Adrenal gland (tissue), 19 donors: ENCODE measurements at regions of chr22 and their contacts with region 1.

Region 1: GRCh38 chr22:19730655-19731360 is 7.5 kb downstream of the GP1BB start:
- DNase-seq: peak; percentile 74 to 87 (median 84)
- H3K4me3 ChIP-seq: peak overlapping the region in 2 of 4 donors; percentile 16 to 24
- H3K27ac ChIP-seq: no peak overlapping the region
- H3K4me1 ChIP-seq: peaks cover 3 to 5% of the 10 kb centered on the region in 2 donors
- H3K27me3 ChIP-seq: no peaks in the 10 kb centered on the region
- CTCF ChIP-seq: peak; percentile 93 to 97 (median 96)
- POLR2A ChIP-seq: no peak

Region 2: DNA sequence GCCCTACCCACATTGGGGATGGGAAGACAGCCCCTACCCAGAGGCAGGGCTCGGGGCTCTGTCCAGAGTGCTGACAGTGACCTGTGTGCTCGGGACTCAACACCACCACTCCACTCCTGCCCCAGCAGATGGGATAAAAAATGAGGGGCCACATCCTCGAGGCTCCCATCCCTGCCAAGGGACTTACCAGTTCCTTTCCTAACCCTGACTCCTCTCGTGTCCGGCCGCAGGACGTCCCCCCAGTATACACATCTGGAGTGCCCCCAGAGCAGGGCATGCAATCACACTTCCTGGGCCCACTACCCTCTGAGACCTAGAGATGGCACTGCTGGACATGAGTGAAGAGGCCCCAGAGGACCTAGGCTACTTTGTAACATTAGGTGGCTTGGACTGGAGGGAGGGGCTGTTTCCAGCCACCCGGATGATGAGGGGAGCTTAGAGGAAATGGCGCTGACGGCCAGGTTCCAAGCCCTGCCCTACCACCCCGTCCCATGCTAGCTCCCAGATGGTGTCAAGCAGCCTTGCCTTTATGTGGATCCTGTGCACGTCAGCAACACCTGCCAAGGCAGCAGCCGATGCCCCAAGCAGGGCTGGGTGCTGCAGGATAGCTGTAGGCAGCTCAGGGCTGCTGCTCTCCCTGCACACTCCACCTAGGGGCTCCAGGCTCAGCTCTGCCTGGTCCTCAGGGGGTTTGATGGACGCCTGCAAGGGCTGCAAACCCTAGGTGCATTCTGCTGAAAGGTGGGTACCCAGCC is 695.2 kb before region 1 on chr22:
- intact Hi-C with region 1: no loop called
- DNase-seq: peak in 3 of 7 donors; percentile 19 to 54 (median 26)
- H3K4me3 ChIP-seq: no peak overlapping the region
- H3K27ac ChIP-seq: no peak overlapping the region
- H3K4me1 ChIP-seq: no peaks in the 10 kb centered on the region
- H3K27me3 ChIP-seq: no peaks in the 10 kb centered on the region
- CTCF ChIP-seq: peak in 2 of 6 experiments; percentile 13 to 21
- POLR2A ChIP-seq: no peak

Region 3: GRCh38 chr22:19909350-19910179 is 178.8 kb after region 1 on chr22:
- intact Hi-C with region 1: loop called (anchors 2 to 5 kb)
- DNase-seq: peak; percentile 70 to 94 (median 82)
- H3K4me3 ChIP-seq: no peak overlapping the region
- H3K27ac ChIP-seq: no peak overlapping the region
- H3K4me1 ChIP-seq: no peaks in the 10 kb centered on the region
- H3K27me3 ChIP-seq: no peaks in the 10 kb centered on the region
- CTCF ChIP-seq: peak; percentile 69 to 95 (median 90)
- POLR2A ChIP-seq: no peak

Region 4: DNA sequence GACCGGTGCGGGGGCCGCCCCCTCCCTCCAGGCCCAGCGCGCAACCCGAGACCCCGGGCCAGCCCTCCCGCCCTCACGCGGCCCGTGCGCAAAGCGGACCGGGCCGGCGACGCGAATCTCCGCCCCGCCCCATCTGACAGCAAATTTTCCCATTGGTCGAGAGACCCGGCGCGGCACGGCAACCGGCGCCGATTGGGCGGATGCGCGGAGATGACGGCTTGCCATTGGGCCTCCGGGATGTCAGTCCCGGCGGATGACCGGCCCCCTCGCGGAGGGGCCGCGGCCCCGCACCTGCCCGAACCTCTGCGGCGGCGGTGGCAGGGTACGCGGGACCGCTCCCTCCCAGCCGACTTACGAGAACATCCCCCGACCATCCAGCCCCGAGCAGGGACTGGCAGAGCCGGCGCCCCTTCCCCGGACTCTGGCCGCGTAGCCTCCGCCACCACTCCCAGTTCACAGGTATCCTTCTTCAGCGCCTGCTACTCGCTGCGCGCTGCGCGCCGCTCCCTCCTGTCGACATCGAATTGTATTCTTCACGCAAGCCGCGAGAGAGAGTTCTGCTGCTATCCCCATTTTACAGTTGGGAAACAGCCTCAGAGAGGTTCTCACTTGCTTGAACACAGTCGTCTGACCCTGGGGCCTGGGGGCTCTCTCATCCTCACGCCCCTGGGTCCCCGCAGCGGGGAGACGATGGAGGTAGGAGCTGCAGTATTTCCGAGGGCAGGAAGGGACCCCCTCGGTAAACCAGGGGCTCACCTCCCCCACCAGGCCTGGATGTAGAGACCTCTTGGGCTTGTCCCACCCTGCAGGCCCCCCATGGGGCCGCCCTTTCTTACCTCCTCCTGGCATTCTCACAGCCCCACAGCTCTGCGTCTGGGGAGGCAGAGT is 286.2 kb after region 1 on chr22 and contains the start of gene ARVCF:
- intact Hi-C with region 1: no loop called
- DNase-seq: peak; percentile 89 to 96 (median 93)
- H3K4me3 ChIP-seq: peak within 1 kb of the TSS in 2 of 4 donors; percentile 46 to 85
- H3K27ac ChIP-seq: peak within 1 kb of the TSS in 2 of 5 donors; percentile 23
- H3K4me1 ChIP-seq: peaks cover 13 to 23% of the 10 kb centered on the region in 2 donors
- H3K27me3 ChIP-seq: no peaks in the 10 kb centered on the region
- CTCF ChIP-seq: peak in 5 of 6 experiments; percentile 19 to 43 (median 29)
- POLR2A ChIP-seq: no peak
- total RNA-seq, gene ARVCF: 8.4 to 46.1 (median 18.4) TPM